PC-9 (cell line): ENCODE measurements at regions of chr5 and their contacts with region 1.

Region 1: DNA sequence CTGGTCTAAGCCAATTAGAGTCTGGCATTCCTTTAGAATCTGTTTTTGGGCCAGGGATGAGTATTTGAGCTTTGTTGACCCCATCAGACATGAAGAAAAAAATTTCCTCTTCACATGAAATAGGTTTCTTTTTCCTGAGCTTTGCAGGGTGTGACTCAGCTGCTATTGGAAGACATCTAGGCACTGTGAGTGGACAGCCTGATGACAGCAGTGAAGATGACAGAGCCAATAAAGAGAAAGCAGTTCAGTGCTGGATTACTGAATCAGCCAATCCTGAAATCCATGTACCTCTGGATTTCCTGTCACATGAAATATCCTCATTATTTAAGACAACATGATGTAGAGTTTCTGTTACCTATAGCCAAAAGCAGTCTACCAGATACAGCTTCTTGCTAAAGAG is 51.3 kb upstream of the GRIA1 start:
- DNase-seq: no peak
- H3K4me3 ChIP-seq: no peak overlapping the region
- H3K27ac ChIP-seq: no peak overlapping the region
- H3K4me1 ChIP-seq: no peaks in the 10 kb centered on the region
- H3K27me3 ChIP-seq: no peaks in the 10 kb centered on the region
- CTCF ChIP-seq: no peak

Region 2: DNA sequence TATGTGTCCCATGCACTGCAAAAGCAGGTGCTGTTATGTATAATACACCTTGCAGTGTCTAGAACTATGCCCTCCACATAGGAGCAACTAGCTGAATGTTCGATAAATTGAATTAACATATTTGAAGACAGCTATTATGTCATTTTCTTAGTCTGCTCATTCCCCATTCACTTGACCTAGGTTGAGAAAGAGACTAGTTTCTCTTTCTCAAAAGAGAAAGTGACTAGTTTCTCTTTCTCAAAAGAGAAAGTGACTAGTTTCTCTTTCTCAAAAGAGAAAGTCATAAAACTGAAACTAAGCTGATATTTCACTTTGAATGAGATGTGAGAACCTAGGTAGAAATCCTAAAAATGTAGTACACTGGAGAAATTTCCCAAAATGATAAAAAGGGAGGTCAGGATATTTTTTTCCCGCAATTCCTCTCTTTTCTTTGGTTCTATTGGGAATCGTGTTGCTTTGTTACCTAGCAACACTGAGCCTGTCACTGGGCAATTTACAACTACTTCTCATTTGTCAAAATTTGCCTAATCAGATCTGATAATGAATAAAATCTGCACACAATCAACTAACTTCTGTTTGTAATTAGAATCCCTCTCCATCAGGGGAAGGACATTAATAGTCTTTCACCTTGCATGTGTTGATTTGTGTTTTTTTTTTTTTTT is 80.7 kb before region 1 on chr5:
- CTCF ChIA-PET with region 1: no interaction called
- POLR2A ChIA-PET with region 1: no interaction called
- intact Hi-C with region 1: no loop called
- DNase-seq: no peak
- H3K4me3 ChIP-seq: no peak overlapping the region
- H3K27ac ChIP-seq: no peak overlapping the region
- H3K4me1 ChIP-seq: no peaks in the 10 kb centered on the region
- H3K27me3 ChIP-seq: 0 out of 2 replicates have a peak, but pooled peaks cover 3% of the 10 kb centered on the region
- CTCF ChIP-seq: no peak

Region 3: DNA sequence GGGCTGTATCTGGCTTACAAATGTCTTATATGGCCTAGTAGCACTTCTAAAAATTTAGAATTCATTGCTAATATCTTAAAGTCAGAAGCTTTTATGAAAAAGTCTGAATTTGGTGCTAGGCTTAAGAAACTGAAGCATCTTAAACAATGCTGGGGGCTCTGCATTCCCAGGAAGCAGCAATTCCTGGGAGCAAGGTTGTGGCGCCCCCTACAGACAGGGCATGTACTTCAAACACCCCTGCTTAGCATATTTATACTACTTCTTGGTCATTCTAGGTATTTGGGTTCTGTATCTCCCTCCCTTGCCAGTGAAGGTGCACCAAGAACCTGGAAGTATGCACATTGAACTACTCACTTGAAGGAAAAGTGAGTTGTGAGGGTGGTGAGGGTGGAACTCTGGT is 13.2 kb before region 1 on chr5:
- CTCF ChIA-PET with region 1: no interaction called
- POLR2A ChIA-PET with region 1: interaction called, 10 read pairs
- intact Hi-C with region 1: no loop called
- DNase-seq: no peak
- H3K4me3 ChIP-seq: no peak overlapping the region
- H3K27ac ChIP-seq: no peak overlapping the region
- H3K4me1 ChIP-seq: no peaks in the 10 kb centered on the region
- H3K27me3 ChIP-seq: 0 out of 2 replicates have a peak, but pooled peaks cover under 1% of the 10 kb centered on the region
- CTCF ChIP-seq: peak; percentile 41; the same call in 1 of the 2 replicates

Region 4: DNA sequence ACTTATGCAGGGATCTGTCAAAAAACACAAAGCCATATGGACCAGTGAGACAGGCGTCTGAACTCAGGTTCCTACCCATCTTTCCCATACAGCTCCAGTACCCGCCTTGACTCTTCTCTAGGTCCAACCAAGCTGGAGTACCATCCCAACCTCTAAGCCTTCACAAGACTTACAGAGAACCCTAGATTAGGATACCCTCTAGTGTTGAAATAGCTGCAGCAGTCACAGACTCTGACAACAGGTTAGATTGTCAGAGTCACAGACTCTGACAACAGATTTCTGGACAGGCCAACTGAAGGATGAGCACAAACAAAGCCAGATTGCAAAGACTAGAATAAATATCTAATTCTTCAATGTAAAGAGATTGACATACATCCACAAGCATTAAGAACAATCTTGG is 317.4 kb after region 1 on chr5:
- CTCF ChIA-PET with region 1: no interaction called
- POLR2A ChIA-PET with region 1: no interaction called
- intact Hi-C with region 1: no loop called
- DNase-seq: no peak
- H3K4me3 ChIP-seq: no peak overlapping the region
- H3K27ac ChIP-seq: no peak overlapping the region
- H3K4me1 ChIP-seq: no peaks in the 10 kb centered on the region
- H3K27me3 ChIP-seq: peaks cover 8% of the 10 kb centered on the region; the same call in 1 of the 2 replicates
- CTCF ChIP-seq: no peak